GM10248 (cell line): ENCODE measurements at regions of chr22 and their contacts with region 1.

Region 1: DNA sequence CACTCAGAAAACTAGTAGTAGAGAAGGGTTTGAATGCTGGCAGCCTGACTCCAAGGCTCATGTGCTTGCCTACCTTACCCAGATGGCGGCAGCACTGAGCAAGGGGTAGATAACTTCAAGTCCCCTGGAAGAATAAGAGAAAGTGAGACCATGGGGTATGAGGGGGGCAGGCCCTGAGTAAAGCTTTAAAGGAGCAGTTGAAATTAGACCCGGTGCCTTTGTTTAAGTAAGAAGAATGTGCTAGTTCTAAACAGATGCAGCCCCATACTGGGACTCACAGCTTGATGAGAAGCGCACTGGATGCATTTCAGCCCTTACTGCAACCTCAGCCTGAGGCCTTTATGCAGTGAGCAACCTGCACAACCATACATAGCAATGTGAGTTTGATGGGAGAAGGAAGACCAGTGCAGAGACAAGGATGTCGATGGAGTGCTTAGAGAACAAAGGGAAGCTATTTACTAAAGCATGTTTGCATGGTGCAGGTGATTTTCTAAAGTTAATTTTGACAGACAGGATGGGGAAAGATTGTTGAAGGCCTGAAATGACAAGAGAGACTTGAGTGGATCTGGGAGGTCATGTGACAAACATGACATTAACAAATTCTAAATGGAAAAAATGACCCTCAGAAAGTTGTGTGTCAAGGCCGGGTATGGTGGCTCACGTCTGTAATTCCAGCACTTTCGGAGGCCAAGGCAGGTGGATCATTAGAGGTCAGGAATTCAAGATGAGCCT is 27.1 kb upstream of the TMA7B start:
- DNase-seq: peak; percentile 50
- CTCF ChIP-seq: peak; percentile 46

Region 2: GRCh38 chr22:39901565-39902146 is 31.4 kb before region 1 on chr22:
- CTCF ChIA-PET with region 1: no interaction called
- POLR2A ChIA-PET with region 1: no interaction called
- DNase-seq: no peak
- CTCF ChIP-seq: no peak

Region 3: DNA sequence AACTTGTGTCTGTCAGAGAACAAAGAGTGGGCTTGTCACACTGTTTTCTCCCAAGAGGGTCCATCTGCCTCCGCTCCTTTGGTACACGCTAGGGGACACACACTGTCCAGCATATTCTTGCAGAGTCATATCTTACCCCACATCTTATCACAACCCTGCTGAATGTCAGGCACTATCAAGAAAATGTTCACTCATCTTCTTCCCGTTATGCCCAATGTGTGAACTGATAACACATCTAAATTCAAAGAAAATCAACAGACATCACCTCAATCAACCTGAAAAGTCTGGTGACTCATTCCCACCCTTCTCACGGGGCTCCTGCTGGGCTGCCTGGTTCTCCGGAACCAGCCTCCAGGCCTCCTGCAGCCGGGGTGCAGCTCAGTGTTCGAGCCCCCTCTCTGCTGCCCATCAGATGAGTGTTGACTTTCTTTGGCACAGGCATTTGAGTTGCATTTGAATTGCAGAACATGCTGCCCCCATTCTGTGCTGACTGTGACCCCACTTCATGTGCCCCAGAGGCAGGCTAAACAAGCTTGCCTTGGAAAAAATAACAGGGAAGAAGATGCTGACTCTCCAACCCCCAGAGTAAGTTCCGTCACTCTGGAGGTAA is 12.8 kb before region 1 on chr22:
- CTCF ChIA-PET with region 1: interaction called, 24 read pairs
- POLR2A ChIA-PET with region 1: no interaction called
- DNase-seq: no peak
- CTCF ChIP-seq: no peak

Region 4: GRCh38 chr22:39943337-39943736 is 10.3 kb after region 1 on chr22:
- CTCF ChIA-PET with region 1: interaction called, 11 read pairs
- POLR2A ChIA-PET with region 1: no interaction called
- DNase-seq: no peak
- CTCF ChIP-seq: no peak